ENCODE measurements at regions of chr2 and their contacts with region 1.

Region 1: GRCh38 chr2:219278655-219279516 is at the start of gene DNAJB2:
- DNase-seq: peak; percentile 97 to 100 (median 99)
- ATAC-seq: peak; percentile 74
- H3K4me3 ChIP-seq: peak within 1 kb of the TSS; percentile 56 to 76
- H3K4me3 Mint-ChIP-seq: peak within 1 kb of the TSS; percentile 90
- H3K27ac ChIP-seq: peak within 1 kb of the TSS; percentile 98 to 99
- H3K27ac Mint-ChIP-seq: peak within 1 kb of the TSS; percentile 99
- H3K4me1 ChIP-seq: peaks cover 31% of the 10 kb centered on the region
- H3K4me1 Mint-ChIP-seq: peaks cover 38% of the 10 kb centered on the region
- H3K27me3 ChIP-seq: no peaks in the 10 kb centered on the region
- H3K27me3 Mint-ChIP-seq: no peaks in the 10 kb centered on the region
- CTCF ChIP-seq: no peak
- total RNA-seq, gene DNAJB2: 108 to 123 TPM

Region 2: GRCh38 chr2:217393585-217394032 is 1885.3 kb before region 1 on chr2:
- CTCF ChIA-PET with region 1: no interaction called
- POLR2A ChIA-PET with region 1: no interaction called
- intact Hi-C with region 1: no loop called
- DNase-seq: no peak
- ATAC-seq: no peak
- H3K4me3 ChIP-seq: no peak overlapping the region
- H3K4me3 Mint-ChIP-seq: no peak overlapping the region
- H3K27ac ChIP-seq: no peak overlapping the region
- H3K27ac Mint-ChIP-seq: no peak overlapping the region
- H3K4me1 ChIP-seq: peaks cover 6% of the 10 kb centered on the region
- H3K4me1 Mint-ChIP-seq: peaks cover 6% of the 10 kb centered on the region
- H3K27me3 ChIP-seq: no peaks in the 10 kb centered on the region
- H3K27me3 Mint-ChIP-seq: no peaks in the 10 kb centered on the region
- CTCF ChIP-seq: no peak

Region 3: GRCh38 chr2:218216674-218217359 is 1062.1 kb before region 1 on chr2 and contains the start of gene ARPC2:
- CTCF ChIA-PET with region 1: no interaction called
- POLR2A ChIA-PET with region 1: no interaction called
- intact Hi-C with region 1: loop called in 1 of 2 experiments (anchors 5 kb)
- DNase-seq: peak; percentile 90 to 98 (median 95)
- ATAC-seq: peak; percentile 78
- H3K4me3 ChIP-seq: peak within 1 kb of the TSS; percentile 91 to 97
- H3K4me3 Mint-ChIP-seq: peak within 1 kb of the TSS; percentile 91
- H3K27ac ChIP-seq: peak within 1 kb of the TSS; percentile 87 to 99
- H3K27ac Mint-ChIP-seq: peak within 1 kb of the TSS; percentile 97
- H3K4me1 ChIP-seq: peaks cover 36% of the 10 kb centered on the region
- H3K4me1 Mint-ChIP-seq: peaks cover 45% of the 10 kb centered on the region
- H3K27me3 ChIP-seq: no peaks in the 10 kb centered on the region
- H3K27me3 Mint-ChIP-seq: no peaks in the 10 kb centered on the region
- CTCF ChIP-seq: no peak
- total RNA-seq, gene ARPC2: 521 to 547 TPM

Region 4: GRCh38 chr2:219206442-219207253 is 72.2 kb before region 1 on chr2 and contains the start of gene ZFAND2B:
- CTCF ChIA-PET with region 1: interaction called, 13 read pairs
- POLR2A ChIA-PET with region 1: interaction called, 11 read pairs
- intact Hi-C with region 1: loop called in 1 of 2 experiments (anchors 1 kb)
- DNase-seq: peak; percentile 91 to 99 (median 96)
- ATAC-seq: peak; percentile 88
- H3K4me3 ChIP-seq: peak within 1 kb of the TSS; percentile 63 to 68
- H3K4me3 Mint-ChIP-seq: peak within 1 kb of the TSS; percentile 95
- H3K27ac ChIP-seq: peak within 1 kb of the TSS; percentile 87 to 88
- H3K27ac Mint-ChIP-seq: peak within 1 kb of the TSS; percentile 99
- H3K4me1 ChIP-seq: peaks cover 48% of the 10 kb centered on the region
- H3K4me1 Mint-ChIP-seq: peaks cover 46% of the 10 kb centered on the region
- H3K27me3 ChIP-seq: no peaks in the 10 kb centered on the region
- H3K27me3 Mint-ChIP-seq: no peaks in the 10 kb centered on the region
- CTCF ChIP-seq: no peak
- total RNA-seq, gene ZFAND2B: 74.3 to 78.7 TPM

Region 5: DNA sequence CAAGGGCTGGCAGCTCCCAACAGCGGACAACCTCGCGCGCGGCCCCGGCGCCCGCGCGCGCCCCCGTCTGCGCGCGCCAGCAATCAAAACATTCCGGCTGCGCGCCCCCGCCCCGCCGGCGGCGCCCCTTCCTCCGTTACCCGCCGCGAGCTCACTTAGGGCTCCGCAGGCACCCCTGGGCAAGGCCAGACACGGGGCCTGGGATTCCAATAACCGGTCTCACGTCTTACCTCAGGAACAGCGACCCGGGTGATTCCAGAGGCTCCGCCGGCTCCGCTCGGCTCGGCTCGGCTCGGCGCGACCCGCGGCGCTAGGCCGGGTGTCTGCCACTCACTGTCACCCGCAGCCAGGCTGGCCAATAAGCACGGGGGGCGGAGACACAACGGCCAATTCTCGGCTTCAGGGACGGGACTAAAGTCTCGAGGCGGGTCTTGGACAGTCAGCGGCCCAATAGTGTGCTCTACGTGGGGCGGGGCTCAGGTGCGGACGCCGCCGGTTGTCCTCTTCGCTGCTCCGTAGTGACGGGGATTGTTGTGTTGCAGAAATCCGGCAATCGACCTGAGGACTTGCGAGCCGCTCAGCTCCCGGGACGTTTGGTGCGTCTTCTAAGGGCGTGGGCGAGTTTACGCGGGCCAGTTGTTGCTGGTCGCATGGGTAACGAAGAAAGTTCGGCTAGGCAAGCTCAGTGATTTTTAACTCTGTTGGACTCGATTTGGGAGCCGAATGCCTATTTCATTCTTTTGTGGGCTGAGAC is 49.4 kb before region 1 on chr2 and contains the starts of genes ANKZF1 and ATG9A:
- CTCF ChIA-PET with region 1: interaction called, 13 read pairs
- POLR2A ChIA-PET with region 1: interaction called, 29 read pairs
- intact Hi-C with region 1: loop called (anchors 1 kb)
- DNase-seq: peak; percentile 95 to 99 (median 98)
- ATAC-seq: peak; percentile 96
- H3K4me3 ChIP-seq: peak within 1 kb of the TSS; percentile 83 to 93
- H3K4me3 Mint-ChIP-seq: peak within 1 kb of the TSS; percentile 99
- H3K27ac ChIP-seq: peak within 1 kb of the TSS; percentile 79 to 95
- H3K27ac Mint-ChIP-seq: peak within 1 kb of the TSS; percentile 98
- H3K4me1 ChIP-seq: peaks cover 39% of the 10 kb centered on the region
- H3K4me1 Mint-ChIP-seq: peaks cover 58% of the 10 kb centered on the region
- H3K27me3 ChIP-seq: no peaks in the 10 kb centered on the region
- H3K27me3 Mint-ChIP-seq: no peaks in the 10 kb centered on the region
- CTCF ChIP-seq: no peak
- total RNA-seq, gene ANKZF1: 97.4 to 99.5 TPM
- total RNA-seq, gene ATG9A: 103 to 116 TPM

Region 6: DNA sequence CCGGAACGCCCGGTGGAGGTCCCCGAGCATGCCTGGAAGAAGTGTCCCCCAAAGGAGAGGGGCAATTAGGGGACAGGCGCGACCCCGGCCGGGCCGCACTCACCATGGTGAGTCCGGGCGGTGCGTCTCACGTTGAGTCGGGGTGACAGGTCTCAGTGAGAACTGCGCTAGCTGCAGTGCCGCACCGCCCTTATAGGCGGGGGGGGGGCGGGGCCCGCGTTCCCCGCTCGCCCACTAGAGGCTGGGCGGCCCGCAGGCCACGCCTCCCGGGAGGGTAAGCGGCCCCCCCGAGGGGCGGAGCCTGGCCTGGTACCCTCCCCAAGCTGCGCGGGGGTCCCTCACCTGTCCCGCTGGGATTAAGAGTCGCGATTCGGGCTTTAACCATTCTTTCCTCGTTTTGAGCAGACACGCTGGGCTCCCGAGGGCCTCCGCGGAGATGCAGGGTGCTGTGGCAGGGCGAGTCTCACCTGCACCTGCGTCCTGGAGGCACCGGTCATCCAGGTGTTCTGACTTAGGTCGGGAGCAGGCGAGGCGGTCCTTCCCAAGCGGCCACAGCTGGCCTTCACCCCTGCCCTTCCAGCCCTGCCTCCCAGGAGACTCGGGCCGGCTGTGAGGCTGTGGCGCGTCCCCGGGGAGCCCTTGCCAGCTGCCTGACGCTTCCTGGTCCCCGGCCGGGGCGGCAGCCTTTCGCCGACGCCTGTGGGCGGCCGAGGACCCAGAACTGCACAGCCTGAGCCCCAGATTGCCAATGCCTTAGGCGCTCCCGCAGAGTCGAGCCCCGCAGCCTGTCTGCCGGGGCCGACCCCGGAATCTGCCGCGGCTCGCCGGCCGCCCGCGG is 24.9 kb before region 1 on chr2 and contains the start of gene TUBA4A:
- CTCF ChIA-PET with region 1: interaction called, 138 read pairs
- POLR2A ChIA-PET with region 1: interaction called, 52 read pairs
- intact Hi-C with region 1: loop called (anchors 1 kb)
- DNase-seq: peak; percentile 82 to 95 (median 91)
- ATAC-seq: peak; percentile 74
- H3K4me3 ChIP-seq: peak within 1 kb of the TSS; percentile 98 to 100
- H3K4me3 Mint-ChIP-seq: peak within 1 kb of the TSS; percentile 87
- H3K27ac ChIP-seq: peak within 1 kb of the TSS; percentile 81 to 93
- H3K27ac Mint-ChIP-seq: peak within 1 kb of the TSS; percentile 96
- H3K4me1 ChIP-seq: peaks cover 37% of the 10 kb centered on the region
- H3K4me1 Mint-ChIP-seq: peaks cover 46% of the 10 kb centered on the region
- H3K27me3 ChIP-seq: no peaks in the 10 kb centered on the region
- H3K27me3 Mint-ChIP-seq: no peaks in the 10 kb centered on the region
- CTCF ChIP-seq: no peak
- total RNA-seq, gene TUBA4A: 322 TPM

Region 7: GRCh38 chr2:219352448-219353023 is 73.7 kb after region 1 on chr2:
- CTCF ChIA-PET with region 1: interaction called, 4 read pairs
- POLR2A ChIA-PET with region 1: no interaction called
- intact Hi-C with region 1: loop called in 1 of 2 experiments (anchors 1 kb)
- DNase-seq: peak; percentile 42 to 74 (median 64)
- ATAC-seq: peak; percentile 84
- H3K4me3 ChIP-seq: no peak overlapping the region
- H3K4me3 Mint-ChIP-seq: no peak overlapping the region
- H3K27ac ChIP-seq: no peak overlapping the region
- H3K27ac Mint-ChIP-seq: no peak overlapping the region
- H3K4me1 ChIP-seq: no peaks in the 10 kb centered on the region
- H3K4me1 Mint-ChIP-seq: no peaks in the 10 kb centered on the region
- H3K27me3 ChIP-seq: no peaks in the 10 kb centered on the region
- H3K27me3 Mint-ChIP-seq: peaks cover 60% of the 10 kb centered on the region
- CTCF ChIP-seq: peak; percentile 69